ENCODE measurements at regions of chr12 and their contacts with region 1.

Region 1: DNA sequence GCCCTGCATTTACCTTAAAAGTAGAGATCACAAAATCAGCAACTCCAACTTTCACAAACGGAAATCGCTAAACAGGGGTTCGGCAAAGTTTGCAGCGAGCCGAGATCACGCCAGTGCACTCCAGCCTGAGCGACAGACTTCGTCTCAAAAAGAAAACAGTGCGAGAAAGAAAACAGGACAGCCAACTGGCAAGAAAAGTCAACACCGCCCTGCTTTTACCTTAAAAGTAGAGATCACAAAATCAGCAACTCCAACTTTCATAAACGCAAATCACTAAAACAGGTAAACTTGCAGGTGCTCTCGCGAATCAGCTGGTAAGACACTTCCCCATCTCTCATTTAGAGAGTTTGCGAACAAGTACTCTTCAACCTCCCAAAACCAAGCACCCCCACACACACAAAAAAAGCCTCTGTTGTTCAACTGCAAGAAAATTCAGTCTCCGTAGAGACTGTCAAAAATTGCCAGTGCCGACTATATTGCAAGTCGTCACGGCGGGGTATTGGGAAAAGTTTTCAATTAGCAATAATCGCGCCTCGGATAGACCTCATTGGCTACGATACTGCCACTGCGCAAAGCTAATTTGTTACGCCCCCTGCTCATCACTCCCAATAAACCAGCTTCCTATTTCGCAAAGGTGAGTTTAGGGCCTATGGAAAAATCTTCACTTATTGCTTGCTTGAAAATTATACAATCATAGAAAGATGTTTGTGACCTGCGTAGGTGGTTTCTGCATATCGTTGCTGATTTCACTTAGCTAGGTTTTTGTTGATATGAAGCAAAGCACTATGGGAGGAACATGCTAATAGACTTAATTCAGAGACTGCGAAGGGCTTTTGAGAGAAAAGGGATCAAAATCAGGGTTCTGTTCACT is at the start of gene RNU4-1:
- DNase-seq: peak; percentile 51 to 93 (median 89)
- ATAC-seq: peak; percentile 58
- H3K4me3 ChIP-seq: peak within 1 kb of the TSS; percentile 64
- H3K4me3 Mint-ChIP-seq: no peak within 1 kb of the TSS
- H3K27ac ChIP-seq: peak within 1 kb of the TSS; percentile 100
- H3K27ac Mint-ChIP-seq: peak within 1 kb of the TSS in 1 of 9 donors; percentile 62
- H3K4me1 ChIP-seq: no peaks in the 10 kb centered on the region
- H3K4me1 Mint-ChIP-seq: peaks cover 0 to 9% (median 4%) of the 10 kb centered on the region in 7 donors
- H3K27me3 ChIP-seq: no peaks in the 10 kb centered on the region
- H3K27me3 Mint-ChIP-seq: peaks cover 0 to 14% (median 0%) of the 10 kb centered on the region in 5 donors
- total RNA-seq, gene RNU4-1: 319 to 3,107 (median 1,510) TPM

Region 2: GRCh38 chr12:120012067-120012621 is 280.8 kb before region 1 on chr12:
- CTCF ChIA-PET with region 1: no interaction called
- POLR2A ChIA-PET with region 1: interaction called, 6 read pairs
- intact Hi-C with region 1: loop called (anchors 5 kb)
- DNase-seq: peak in 8 of 9 donors; percentile 31 to 98 (median 74)
- ATAC-seq: peak; percentile 78
- H3K4me3 ChIP-seq: peak overlapping the region; percentile 33
- H3K4me3 Mint-ChIP-seq: peak overlapping the region; percentile 8 to 86 (median 74)
- H3K27ac ChIP-seq: peak overlapping the region; percentile 93
- H3K27ac Mint-ChIP-seq: peak overlapping the region; percentile 93 to 100 (median 96)
- H3K4me1 ChIP-seq: peaks cover 73 to 79% of the 10 kb centered on the region in 2 donors
- H3K4me1 Mint-ChIP-seq: peaks cover 41 to 94% (median 82%) of the 10 kb centered on the region in 7 donors
- H3K27me3 ChIP-seq: no peaks in the 10 kb centered on the region
- H3K27me3 Mint-ChIP-seq: no peaks in the 10 kb centered on the region

Region 3: DNA sequence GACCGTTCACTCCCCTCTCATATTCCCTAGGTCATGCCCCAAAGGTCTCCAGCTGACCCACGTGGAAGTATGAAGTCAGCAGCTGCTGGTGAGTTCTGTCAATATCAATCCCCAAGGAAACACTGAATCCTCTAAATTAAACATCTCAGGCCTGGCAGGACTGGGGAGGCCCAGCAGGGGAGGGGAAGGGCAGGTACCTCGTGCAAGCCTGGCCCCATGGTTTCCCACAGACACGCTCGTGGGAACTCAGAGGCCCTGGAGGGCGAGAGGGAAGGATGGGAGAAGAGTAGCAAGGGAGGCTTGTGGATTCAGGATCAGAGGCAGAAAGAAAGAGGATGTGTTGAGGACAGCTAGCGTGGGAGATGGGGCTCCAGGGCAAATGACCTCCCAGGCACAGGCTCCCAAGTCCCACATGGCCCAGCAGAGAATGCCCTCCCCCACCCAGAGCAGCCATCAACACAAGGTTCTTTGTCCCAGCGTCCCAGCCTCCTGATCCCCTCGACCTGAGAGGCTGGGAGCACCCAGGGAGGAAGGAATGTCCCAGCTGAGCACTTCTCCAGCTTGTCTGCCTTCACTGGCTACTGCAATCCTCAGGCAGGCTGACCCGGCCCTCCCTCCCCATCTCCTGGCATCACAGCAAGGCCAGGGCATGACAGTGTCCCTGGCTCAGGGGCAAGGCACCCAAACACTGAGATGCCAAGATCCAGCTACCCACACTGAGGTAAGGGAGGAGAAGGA is 71.9 kb before region 1 on chr12:
- CTCF ChIA-PET with region 1: interaction called, 3 read pairs
- POLR2A ChIA-PET with region 1: interaction called, 156 read pairs
- intact Hi-C with region 1: no loop called
- DNase-seq: no peak
- ATAC-seq: no peak
- H3K4me3 ChIP-seq: no peak overlapping the region
- H3K4me3 Mint-ChIP-seq: no peak overlapping the region
- H3K27ac ChIP-seq: no peak overlapping the region
- H3K27ac Mint-ChIP-seq: peak overlapping the region in 2 of 9 donors; percentile 32 to 39
- H3K4me1 ChIP-seq: peaks cover 5 to 12% of the 10 kb centered on the region in 2 donors
- H3K4me1 Mint-ChIP-seq: peaks cover 9 to 21% (median 15%) of the 10 kb centered on the region in 7 donors
- H3K27me3 ChIP-seq: no peaks in the 10 kb centered on the region
- H3K27me3 Mint-ChIP-seq: no peaks in the 10 kb centered on the region

Region 4: GRCh38 chr12:120242275-120242799 is 50.6 kb before region 1 on chr12:
- CTCF ChIA-PET with region 1: no interaction called
- POLR2A ChIA-PET with region 1: interaction called, 62 read pairs
- intact Hi-C with region 1: no loop called
- DNase-seq: no peak
- ATAC-seq: peak; percentile 28
- H3K4me3 ChIP-seq: no peak overlapping the region
- H3K4me3 Mint-ChIP-seq: peak overlapping the region in 4 of 10 donors; percentile 9 to 59 (median 43)
- H3K27ac ChIP-seq: no peak overlapping the region
- H3K27ac Mint-ChIP-seq: peak overlapping the region in 5 of 9 donors; percentile 30 to 75 (median 53)
- H3K4me1 ChIP-seq: peaks cover 48 to 62% of the 10 kb centered on the region in 2 donors
- H3K4me1 Mint-ChIP-seq: peaks cover 45 to 84% (median 74%) of the 10 kb centered on the region in 7 donors
- H3K27me3 ChIP-seq: no peaks in the 10 kb centered on the region
- H3K27me3 Mint-ChIP-seq: no peaks in the 10 kb centered on the region

Region 5: GRCh38 chr12:120265473-120266179 is 27.3 kb before region 1 on chr12 and contains the start of gene PXN:
- CTCF ChIA-PET with region 1: interaction called, 5 read pairs
- POLR2A ChIA-PET with region 1: interaction called, 127 read pairs
- intact Hi-C with region 1: loop called (anchors 1 to 2 kb)
- DNase-seq: peak; percentile 83 to 98 (median 91)
- ATAC-seq: peak; percentile 99
- H3K4me3 ChIP-seq: peak within 1 kb of the TSS; percentile 76
- H3K4me3 Mint-ChIP-seq: peak within 1 kb of the TSS; percentile 89 to 100 (median 93)
- H3K27ac ChIP-seq: peak within 1 kb of the TSS; percentile 91
- H3K27ac Mint-ChIP-seq: peak within 1 kb of the TSS; percentile 86 to 97 (median 93)
- H3K4me1 ChIP-seq: peaks cover 29 to 40% of the 10 kb centered on the region in 2 donors
- H3K4me1 Mint-ChIP-seq: peaks cover 17 to 46% (median 33%) of the 10 kb centered on the region in 7 donors
- H3K27me3 ChIP-seq: no peaks in the 10 kb centered on the region
- H3K27me3 Mint-ChIP-seq: no peaks in the 10 kb centered on the region
- total RNA-seq, gene PXN: 103 to 202 (median 158) TPM

Region 6: DNA sequence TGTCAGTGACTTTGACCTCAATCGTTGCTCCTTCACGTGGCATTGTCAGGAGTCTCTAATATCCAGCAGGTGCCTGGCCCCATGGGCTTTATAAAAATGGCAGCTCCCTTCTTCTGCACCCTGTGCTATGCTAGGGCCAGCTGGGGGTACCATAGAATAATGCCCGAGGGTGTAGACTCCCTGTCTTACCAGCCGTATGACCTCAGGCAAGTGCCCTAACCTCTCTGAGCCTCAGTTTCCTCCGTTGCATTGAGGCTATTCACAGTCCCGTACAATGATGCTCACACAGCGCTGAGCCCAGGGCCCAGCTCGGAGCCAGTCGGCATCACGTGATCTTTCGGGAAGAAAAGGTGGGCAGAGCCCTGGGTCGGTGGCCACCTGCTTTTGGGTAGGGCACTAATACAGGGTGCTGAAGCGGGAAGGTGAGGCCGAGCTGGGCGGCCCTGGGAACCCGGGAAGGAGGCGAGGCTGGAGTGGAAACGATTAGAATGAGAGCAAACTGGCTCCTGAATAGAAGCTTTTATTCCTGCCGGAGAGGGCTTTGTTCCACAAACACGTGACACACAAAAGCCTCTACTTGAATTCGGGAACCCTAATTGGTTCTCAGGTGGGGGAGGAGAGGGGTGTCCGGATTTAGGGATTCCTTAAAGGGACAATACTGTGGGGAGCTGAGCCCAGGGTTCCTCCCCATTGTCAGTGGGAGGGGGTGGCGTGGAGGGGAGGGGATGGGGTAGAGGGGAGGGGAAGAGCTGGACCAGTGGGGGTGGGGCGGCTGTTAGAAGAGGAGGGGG is 96.0 kb after region 1 on chr12:
- CTCF ChIA-PET with region 1: no interaction called
- POLR2A ChIA-PET with region 1: no interaction called
- intact Hi-C with region 1: no loop called
- DNase-seq: no peak
- ATAC-seq: no peak
- H3K4me3 ChIP-seq: no peak overlapping the region
- H3K4me3 Mint-ChIP-seq: peak overlapping the region in 1 of 10 donors; percentile 1
- H3K27ac ChIP-seq: no peak overlapping the region
- H3K27ac Mint-ChIP-seq: no peak overlapping the region
- H3K4me1 ChIP-seq: no peaks in the 10 kb centered on the region
- H3K4me1 Mint-ChIP-seq: peaks cover 0 to 14% (median 0%) of the 10 kb centered on the region in 7 donors
- H3K27me3 ChIP-seq: no peaks in the 10 kb centered on the region
- H3K27me3 Mint-ChIP-seq: peaks cover 21 to 53% (median 39%) of the 10 kb centered on the region in 5 donors

Region 7: GRCh38 chr12:120437754-120438494 is 145.0 kb after region 1 on chr12 and contains the start of gene COX6A1:
- CTCF ChIA-PET with region 1: no interaction called
- POLR2A ChIA-PET with region 1: interaction called, 21 read pairs
- intact Hi-C with region 1: loop called in 1 of 2 experiments (anchors 1 kb)
- DNase-seq: peak; percentile 77 to 99 (median 96)
- ATAC-seq: peak; percentile 96
- H3K4me3 ChIP-seq: peak within 1 kb of the TSS; percentile 63
- H3K4me3 Mint-ChIP-seq: peak within 1 kb of the TSS; percentile 87 to 100 (median 96)
- H3K27ac ChIP-seq: peak within 1 kb of the TSS; percentile 83
- H3K27ac Mint-ChIP-seq: peak within 1 kb of the TSS; percentile 88 to 97 (median 93)
- H3K4me1 ChIP-seq: peaks cover 15 to 20% of the 10 kb centered on the region in 2 donors
- H3K4me1 Mint-ChIP-seq: peaks cover 17 to 33% (median 30%) of the 10 kb centered on the region in 7 donors
- H3K27me3 ChIP-seq: no peaks in the 10 kb centered on the region
- H3K27me3 Mint-ChIP-seq: peaks cover 0 to 4% (median 2%) of the 10 kb centered on the region in 5 donors
- total RNA-seq, gene COX6A1: 118 to 270 (median 130) TPM

Measured in naive thymus-derived CD4-positive, alpha-beta T cell (primary cell).